PC-3 (cell line): ENCODE measurements at regions of chr17 and their contacts with region 1.

Region 1: GRCh38 chr17:59558977-59559376 is 6.4 kb upstream of the DHX40 start:
- DNase-seq: peak; percentile 33
- ATAC-seq: peak; percentile 46
- H3K4me3 ChIP-seq: no peak overlapping the region
- H3K27ac ChIP-seq: no peak overlapping the region
- H3K4me1 ChIP-seq: 0 out of 2 replicates have a peak, but pooled peaks cover 4% of the 10 kb centered on the region
- H3K27me3 ChIP-seq: peaks cover 6% of the 10 kb centered on the region; the same call in 1 of the 2 replicates
- CTCF ChIP-seq: peak; percentile 63

Region 2: DNA sequence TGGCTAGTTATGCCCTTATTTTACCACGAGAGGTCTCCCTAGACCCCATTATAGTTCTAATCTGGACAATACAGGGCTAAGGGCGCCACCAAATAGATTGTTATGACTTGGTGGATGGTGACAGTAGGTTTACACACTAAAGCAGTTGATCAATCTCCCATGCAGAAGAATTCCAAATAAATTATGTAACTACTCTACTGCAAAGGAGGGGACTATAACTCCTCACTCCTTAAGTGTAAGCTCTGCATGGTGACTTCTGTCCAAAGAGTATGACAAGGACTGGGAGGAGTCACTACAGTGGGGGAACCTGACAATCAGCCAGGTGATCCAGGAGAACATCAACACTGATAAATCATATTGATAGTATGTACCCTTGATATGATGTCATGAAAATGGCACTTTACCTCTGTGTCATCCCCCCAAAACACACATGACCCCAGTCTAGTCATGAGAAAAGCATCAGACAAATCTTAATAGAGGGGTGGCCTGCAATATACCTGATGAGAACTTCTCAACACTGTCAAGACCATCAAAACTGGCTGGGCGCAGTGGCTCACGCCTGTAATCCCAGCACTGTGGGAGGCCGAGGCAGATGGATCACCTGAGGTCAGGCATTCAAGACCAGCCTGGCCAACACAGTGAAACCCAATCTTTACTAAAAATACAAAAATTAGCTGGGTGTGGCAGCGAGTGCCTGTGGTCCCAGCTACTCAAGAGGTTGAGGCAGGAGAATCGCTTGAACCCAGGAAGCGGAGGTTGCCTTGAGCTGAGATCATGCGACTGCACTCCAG is 247.7 kb before region 1 on chr17:
- CTCF ChIA-PET with region 1: interaction called, 5 read pairs
- POLR2A ChIA-PET with region 1: no interaction called
- intact Hi-C with region 1: loop called (anchors 10 kb)
- DNase-seq: peak; percentile 88
- ATAC-seq: peak; percentile 99
- H3K4me3 ChIP-seq: no peak overlapping the region
- H3K27ac ChIP-seq: no peak overlapping the region
- H3K4me1 ChIP-seq: no peaks in the 10 kb centered on the region
- H3K27me3 ChIP-seq: no peaks in the 10 kb centered on the region
- CTCF ChIP-seq: peak; percentile 96

Region 3: DNA sequence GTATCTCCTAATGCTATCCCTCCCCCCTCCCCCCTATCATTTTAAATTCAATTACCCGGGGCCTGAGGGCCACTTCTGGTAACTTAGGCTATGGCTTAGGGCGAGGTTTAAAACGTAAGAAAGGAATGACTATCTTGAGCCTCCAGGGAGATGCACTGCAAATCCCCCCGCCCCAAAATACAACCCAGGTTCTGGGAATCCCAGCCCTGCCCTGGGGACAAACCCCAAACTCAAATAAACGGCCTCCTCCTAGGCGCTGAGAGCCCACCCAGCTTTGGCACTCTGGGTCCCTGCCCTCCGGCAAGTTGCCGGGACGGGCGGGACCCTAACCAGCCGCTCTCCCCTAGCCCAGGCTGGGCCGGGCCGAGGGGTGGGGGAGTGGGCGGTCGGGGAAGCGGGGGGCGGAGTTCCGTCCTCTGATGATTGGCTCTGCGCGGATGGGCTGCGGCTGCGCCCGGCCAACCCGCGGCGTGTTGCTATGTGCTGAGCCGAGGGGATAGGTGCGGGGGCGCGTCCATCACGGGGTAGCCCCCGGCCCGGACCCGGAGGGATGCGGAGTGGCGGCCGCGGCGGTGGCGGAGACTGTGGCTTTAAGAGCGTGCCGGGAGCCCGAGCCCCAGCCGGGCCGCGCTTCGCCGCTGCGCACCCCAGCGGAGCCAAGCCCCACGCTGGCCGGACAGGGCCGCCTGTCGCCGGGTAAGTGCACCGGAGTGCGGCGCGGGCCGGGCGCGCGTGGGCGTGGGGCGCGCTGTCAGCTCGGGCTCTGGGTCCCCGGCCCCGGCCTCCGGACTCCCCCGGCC is 227.6 kb before region 1 on chr17 and contains the start of gene YPEL2:
- CTCF ChIA-PET with region 1: interaction called, 4 read pairs
- POLR2A ChIA-PET with region 1: no interaction called
- intact Hi-C with region 1: loop called (anchors 1 kb)
- DNase-seq: peak; percentile 93
- ATAC-seq: peak; percentile 97
- H3K4me3 ChIP-seq: peak within 1 kb of the TSS; percentile 82
- H3K27ac ChIP-seq: no peak within 1 kb of the TSS
- H3K4me1 ChIP-seq: peaks cover 21% of the 10 kb centered on the region
- H3K27me3 ChIP-seq: peaks cover 16% of the 10 kb centered on the region
- CTCF ChIP-seq: no peak
- total RNA-seq, gene YPEL2: 0.47 and 1.1 TPM in 2 replicates

Region 4: DNA sequence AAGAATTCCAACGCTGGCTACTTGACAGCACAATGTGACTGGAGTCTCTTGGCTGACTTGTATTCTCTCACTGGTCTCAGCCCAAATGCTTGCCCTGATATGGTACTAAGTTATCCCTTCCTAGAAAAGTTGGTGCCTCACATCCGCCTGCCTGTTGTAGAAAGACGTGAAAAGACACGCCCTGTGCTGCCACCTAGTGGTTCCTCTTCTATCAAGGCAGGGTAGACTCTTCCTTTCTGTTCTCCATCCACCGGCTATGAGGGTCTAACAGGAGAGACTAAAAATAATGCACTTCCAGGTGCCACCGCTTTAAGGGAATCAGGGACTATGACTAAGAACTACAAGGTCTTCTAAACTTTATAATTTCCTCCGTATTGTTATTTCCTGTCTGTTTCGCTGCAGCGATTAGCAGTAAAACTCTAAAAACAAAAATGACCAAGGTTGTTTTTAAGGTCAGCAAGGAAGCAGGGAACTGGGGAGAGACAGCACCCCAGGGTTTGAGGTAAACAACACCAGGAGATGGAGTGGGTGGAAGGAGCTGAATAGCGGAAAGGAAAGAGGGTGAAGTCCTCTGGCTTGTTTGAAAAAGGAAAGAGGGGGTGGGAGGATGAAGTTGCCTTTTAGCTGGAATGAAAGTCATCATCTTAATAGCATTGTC is 118.1 kb before region 1 on chr17:
- CTCF ChIA-PET with region 1: interaction called, 10 read pairs
- POLR2A ChIA-PET with region 1: no interaction called
- intact Hi-C with region 1: no loop called
- DNase-seq: peak; percentile 95
- ATAC-seq: peak; percentile 100
- H3K4me3 ChIP-seq: no peak overlapping the region
- H3K27ac ChIP-seq: no peak overlapping the region
- H3K4me1 ChIP-seq: no peaks in the 10 kb centered on the region
- H3K27me3 ChIP-seq: no peaks in the 10 kb centered on the region
- CTCF ChIP-seq: peak; percentile 97

Region 5: GRCh38 chr17:59521204-59522126 is 37.5 kb before region 1 on chr17:
- CTCF ChIA-PET with region 1: interaction called, 16 read pairs
- POLR2A ChIA-PET with region 1: no interaction called
- intact Hi-C with region 1: loop called (anchors 1 kb)
- DNase-seq: peak; percentile 81
- ATAC-seq: peak; percentile 97
- H3K4me3 ChIP-seq: no peak overlapping the region
- H3K27ac ChIP-seq: no peak overlapping the region
- H3K4me1 ChIP-seq: peaks cover 4% of the 10 kb centered on the region; the same call in 1 of the 2 replicates
- H3K27me3 ChIP-seq: no peaks in the 10 kb centered on the region
- CTCF ChIP-seq: peak; percentile 95

Region 6: GRCh38 chr17:59712862-59713261 is 153.9 kb after region 1 on chr17:
- CTCF ChIA-PET with region 1: no interaction called
- POLR2A ChIA-PET with region 1: no interaction called
- intact Hi-C with region 1: no loop called
- DNase-seq: no peak
- ATAC-seq: no peak
- H3K4me3 ChIP-seq: no peak overlapping the region
- H3K27ac ChIP-seq: no peak overlapping the region
- H3K4me1 ChIP-seq: peaks cover 18% of the 10 kb centered on the region
- H3K27me3 ChIP-seq: no peaks in the 10 kb centered on the region
- CTCF ChIP-seq: no peak